MCF 10A (cell line): ENCODE measurements at regions of chr5 and their contacts with region 1.

Region 1: DNA sequence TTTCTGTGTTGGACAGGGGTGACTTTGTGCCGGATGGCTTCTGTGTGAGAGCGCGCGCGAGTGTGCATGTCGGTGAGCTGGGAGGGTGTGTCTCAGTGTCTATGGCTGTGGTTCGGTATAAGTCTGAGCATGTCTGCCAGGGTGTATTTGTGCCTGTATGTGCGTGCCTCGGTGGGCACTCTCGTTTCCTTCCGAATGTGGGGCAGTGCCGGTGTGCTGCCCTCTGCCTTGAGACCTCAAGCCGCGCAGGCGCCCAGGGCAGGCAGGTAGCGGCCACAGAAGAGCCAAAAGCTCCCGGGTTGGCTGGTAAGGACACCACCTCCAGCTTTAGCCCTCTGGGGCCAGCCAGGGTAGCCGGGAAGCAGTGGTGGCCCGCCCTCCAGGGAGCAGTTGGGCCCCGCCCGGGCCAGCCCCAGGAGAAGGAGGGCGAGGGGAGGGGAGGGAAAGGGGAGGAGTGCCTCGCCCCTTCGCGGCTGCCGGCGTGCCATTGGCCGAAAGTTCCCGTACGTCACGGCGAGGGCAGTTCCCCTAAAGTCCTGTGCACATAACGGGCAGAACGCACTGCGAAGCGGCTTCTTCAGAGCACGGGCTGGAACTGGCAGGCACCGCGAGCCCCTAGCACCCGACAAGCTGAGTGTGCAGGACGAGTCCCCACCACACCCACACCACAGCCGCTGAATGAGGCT is at the start of gene ADRB2:
- DNase-seq: peak; percentile 99
- H3K4me3 Mint-ChIP-seq: peak within 1 kb of the TSS; percentile 90
- H3K27ac Mint-ChIP-seq: peak within 1 kb of the TSS; percentile 91
- H3K4me1 Mint-ChIP-seq: peaks cover 44% of the 10 kb centered on the region
- H3K27me3 Mint-ChIP-seq: no peaks in the 10 kb centered on the region
- CTCF ChIP-seq: no peak
- total RNA-seq, gene ADRB2: 6.9 and 9.5 TPM in 2 replicates

Region 2: DNA sequence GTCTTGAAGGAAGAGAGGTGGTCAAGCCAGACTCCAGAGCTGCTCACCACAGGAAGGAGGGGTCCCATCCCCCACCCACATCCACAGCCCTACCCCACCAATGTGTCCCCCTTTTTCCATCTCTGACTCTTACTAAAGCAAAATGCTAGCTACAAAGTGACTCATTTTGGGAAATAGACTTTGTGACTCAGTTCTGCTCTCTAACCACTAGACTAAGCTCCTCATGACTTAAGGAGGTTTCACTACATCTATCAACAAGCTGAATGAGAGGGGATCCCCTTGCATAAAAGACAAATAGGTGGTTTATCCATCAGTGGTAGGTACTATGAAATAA is 34.9 kb before region 1 on chr5:
- CTCF ChIA-PET with region 1: interaction called, 19 read pairs
- POLR2A ChIA-PET with region 1: interaction called, 17 read pairs
- intact Hi-C with region 1: no loop called
- DNase-seq: peak; percentile 66
- H3K4me3 Mint-ChIP-seq: no peak overlapping the region
- H3K27ac Mint-ChIP-seq: peak overlapping the region; percentile 88
- H3K4me1 Mint-ChIP-seq: peaks cover 60% of the 10 kb centered on the region
- H3K27me3 Mint-ChIP-seq: no peaks in the 10 kb centered on the region
- CTCF ChIP-seq: no peak

Region 3: GRCh38 chr5:148849461-148849860 is 23.3 kb after region 1 on chr5:
- CTCF ChIA-PET with region 1: interaction called, 6 read pairs
- POLR2A ChIA-PET with region 1: interaction called, 12 read pairs
- intact Hi-C with region 1: no loop called
- DNase-seq: no peak
- H3K4me3 Mint-ChIP-seq: no peak overlapping the region
- H3K27ac Mint-ChIP-seq: no peak overlapping the region
- H3K4me1 Mint-ChIP-seq: peaks cover 6% of the 10 kb centered on the region
- H3K27me3 Mint-ChIP-seq: no peaks in the 10 kb centered on the region
- CTCF ChIP-seq: no peak

Region 4: DNA sequence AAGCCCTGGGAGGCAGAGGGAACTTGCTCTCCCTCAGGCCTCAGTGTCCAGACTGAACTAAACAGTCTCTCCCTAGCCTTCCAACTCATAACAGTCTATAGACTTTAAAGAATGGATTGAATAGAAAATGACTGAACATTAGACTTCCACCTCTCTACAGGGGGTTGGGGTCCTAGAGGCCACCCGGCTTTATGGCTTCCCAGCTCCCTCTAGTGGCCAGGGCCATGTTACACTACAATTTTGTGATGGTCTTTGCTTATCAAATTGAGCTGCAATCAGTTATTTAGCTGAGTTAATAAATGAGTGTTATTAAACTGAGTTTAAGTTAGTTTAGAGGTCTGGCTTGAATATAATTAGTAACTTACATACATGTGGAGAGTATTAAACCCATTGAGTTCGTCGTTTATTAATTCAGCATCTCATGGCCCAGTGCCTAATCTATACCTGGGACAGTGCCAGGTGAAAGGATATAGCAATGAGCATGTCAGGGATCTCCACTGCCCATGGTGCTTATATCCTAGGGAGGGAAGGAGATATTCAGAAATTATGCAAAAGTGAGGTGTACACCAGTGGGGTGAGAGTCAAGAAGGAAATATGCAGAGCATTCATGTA is 131.5 kb after region 1 on chr5:
- CTCF ChIA-PET with region 1: interaction called, 50 read pairs
- POLR2A ChIA-PET with region 1: interaction called, 136 read pairs
- intact Hi-C with region 1: loop called (anchors 1 kb)
- DNase-seq: peak; percentile 71
- H3K4me3 Mint-ChIP-seq: no peak overlapping the region
- H3K27ac Mint-ChIP-seq: no peak overlapping the region
- H3K4me1 Mint-ChIP-seq: peaks cover 24% of the 10 kb centered on the region
- H3K27me3 Mint-ChIP-seq: no peaks in the 10 kb centered on the region
- CTCF ChIP-seq: peak; percentile 99

Region 5: DNA sequence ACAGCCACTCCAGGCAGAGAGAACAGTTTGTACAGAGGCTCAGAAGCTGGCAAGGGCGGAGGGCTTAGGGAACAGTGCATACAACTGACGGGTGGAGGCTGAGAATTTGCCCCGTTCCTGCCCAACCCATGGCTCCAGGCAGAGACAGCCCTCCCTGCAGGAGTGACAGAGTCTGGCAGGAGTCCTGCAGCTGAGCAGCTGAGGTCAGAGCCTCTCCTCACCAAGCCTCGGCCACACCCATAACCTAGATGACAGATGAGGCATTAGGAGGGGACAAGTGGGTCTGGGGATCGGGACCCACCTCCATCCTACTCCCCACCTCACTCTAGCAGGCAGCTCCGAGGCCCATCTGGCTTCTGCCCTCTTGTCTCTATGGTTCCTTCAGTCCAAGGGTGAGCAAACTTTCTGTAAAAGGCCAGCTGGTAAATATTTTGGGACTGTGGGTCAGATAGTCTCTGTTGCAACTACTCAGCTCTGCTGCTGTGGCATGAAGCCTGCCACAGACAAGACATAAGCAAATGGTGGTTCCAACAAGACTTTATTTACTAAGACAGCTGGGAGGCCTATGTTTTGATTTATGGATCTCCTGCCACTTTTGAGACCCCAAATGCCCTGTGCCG is 153.0 kb after region 1 on chr5:
- CTCF ChIA-PET with region 1: interaction called, 16 read pairs
- POLR2A ChIA-PET with region 1: interaction called, 255 read pairs
- intact Hi-C with region 1: no loop called
- DNase-seq: peak; percentile 95
- H3K4me3 Mint-ChIP-seq: peak overlapping the region; percentile 59
- H3K27ac Mint-ChIP-seq: peak overlapping the region; percentile 97
- H3K4me1 Mint-ChIP-seq: peaks cover 70% of the 10 kb centered on the region
- H3K27me3 Mint-ChIP-seq: no peaks in the 10 kb centered on the region
- CTCF ChIP-seq: no peak